Esophagus muscularis mucosa (tissue), 4 donors: ENCODE measurements at regions of chr9 and their contacts with region 1.

Region 1: DNA sequence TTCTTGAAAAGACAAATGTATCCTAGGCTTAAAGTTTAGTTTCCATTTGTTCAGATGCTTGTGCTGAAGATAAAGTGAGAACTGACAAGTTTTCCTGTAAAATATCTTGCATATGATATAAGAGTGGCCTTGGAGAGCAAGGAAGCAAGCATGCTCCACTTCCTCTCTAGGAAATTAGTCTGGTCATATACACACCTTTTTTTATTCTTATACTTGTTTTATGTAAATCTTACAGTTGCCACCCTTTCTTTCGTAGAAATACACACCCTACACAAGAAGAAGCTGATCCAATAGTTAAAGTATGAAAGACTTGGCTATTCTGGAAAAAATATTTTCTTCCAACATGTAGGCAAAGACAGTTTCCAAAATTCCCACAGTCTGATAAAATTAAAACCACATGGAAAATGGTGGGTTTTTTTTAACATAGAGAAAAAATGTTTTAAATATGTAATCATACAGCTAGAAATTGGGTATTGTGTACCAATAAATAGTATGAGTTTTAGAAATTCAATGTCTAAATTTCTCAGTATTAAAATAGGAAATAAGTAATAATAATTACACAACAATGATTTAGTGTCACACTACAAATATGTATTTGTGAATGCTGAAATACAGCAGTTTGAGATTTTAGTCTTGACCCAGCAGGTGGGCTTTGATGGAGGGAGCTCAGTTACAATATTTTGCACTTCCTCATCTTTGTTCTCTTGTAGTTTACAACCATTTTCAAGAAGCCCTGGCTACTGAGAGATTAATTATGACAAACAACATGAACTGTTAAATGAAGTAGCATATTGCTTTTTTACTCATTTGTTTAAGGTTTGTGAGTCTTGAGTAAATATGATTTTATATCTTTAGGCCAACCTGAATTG is 185.7 kb upstream of the GNA14 start:
- DNase-seq: no peak
- H3K4me3 ChIP-seq: no peak overlapping the region
- H3K27ac ChIP-seq: no peak overlapping the region
- H3K4me1 ChIP-seq: peaks cover 4 to 40% (median 20%) of the 10 kb centered on the region in 4 donors
- H3K27me3 ChIP-seq: no peaks in the 10 kb centered on the region
- CTCF ChIP-seq: no peak
- EP300 ChIP-seq: no peak
- POLR2A ChIP-seq: no peak

Region 2: GRCh38 chr9:77475641-77476473 is 357.9 kb before region 1 on chr9:
- intact Hi-C with region 1: no loop called
- DNase-seq: peak; percentile 79
- H3K4me3 ChIP-seq: no peak overlapping the region
- H3K27ac ChIP-seq: no peak overlapping the region
- H3K4me1 ChIP-seq: no peaks in the 10 kb centered on the region
- H3K27me3 ChIP-seq: no peaks in the 10 kb centered on the region
- CTCF ChIP-seq: no peak
- EP300 ChIP-seq: no peak
- POLR2A ChIP-seq: no peak

Region 3: DNA sequence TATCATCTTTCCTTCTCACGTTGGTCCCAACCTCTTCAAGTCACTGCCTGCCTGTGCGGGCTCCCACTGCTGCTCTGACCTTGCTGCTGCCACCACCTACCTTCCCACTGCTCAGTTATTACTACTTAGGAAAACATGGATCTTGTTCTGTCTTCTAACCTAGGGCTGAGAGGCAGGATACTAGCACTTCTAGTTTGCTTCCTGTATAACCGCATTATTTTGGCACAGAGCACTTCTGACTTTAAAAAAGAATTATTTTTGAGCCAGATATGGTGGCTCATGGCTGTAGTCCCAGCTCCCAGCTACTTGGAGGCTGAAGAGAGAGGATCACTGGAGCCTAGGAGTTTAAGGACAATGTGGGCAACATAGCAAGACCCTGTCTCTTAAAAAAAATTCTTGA is 50.3 kb before region 1 on chr9:
- intact Hi-C with region 1: loop called (anchors 5 kb)
- DNase-seq: no peak
- H3K4me3 ChIP-seq: no peak overlapping the region
- H3K27ac ChIP-seq: no peak overlapping the region
- H3K4me1 ChIP-seq: peaks cover 0 to 21% (median 4%) of the 10 kb centered on the region in 4 donors
- H3K27me3 ChIP-seq: no peaks in the 10 kb centered on the region
- CTCF ChIP-seq: no peak
- EP300 ChIP-seq: no peak
- POLR2A ChIP-seq: no peak